ENCODE measurements at regions of chr6 and their contacts with region 1.

Region 1: DNA sequence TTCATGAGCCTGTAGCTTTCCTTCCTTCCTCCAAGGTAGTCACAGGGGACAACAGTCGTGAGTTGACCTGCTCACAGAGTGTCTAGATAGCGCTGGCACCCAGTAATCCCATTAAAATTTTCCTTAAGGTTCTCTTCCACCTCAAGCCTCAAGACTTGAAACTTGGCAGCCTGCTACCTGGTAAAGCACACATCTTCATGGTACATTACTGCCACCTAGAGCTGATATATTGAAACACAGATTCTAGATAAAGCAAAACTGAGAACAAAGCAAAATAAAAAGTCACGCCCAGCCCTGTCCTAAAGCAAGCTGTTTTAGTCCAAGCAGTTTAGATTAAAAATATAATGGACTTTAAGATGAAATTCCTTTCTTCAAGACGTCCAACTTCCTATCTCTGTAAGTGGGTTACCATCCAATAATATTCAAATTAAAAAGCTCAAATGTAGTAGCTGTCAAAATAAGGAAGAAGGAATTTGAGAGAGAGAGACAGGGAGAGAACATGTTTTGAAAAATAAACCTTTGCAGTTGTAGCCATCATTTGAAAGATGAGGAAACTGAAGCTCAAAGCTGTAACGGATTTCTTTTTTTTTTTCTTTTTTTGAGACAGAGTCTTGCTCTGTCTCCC is 50.7 kb upstream of the CD83 start:
- DNase-seq: peak; percentile 72
- H3K4me3 Mint-ChIP-seq: peak overlapping the region; percentile 58
- H3K27ac Mint-ChIP-seq: peak overlapping the region; percentile 81
- H3K4me1 Mint-ChIP-seq: peaks cover 19% of the 10 kb centered on the region
- H3K27me3 Mint-ChIP-seq: peaks cover 25% of the 10 kb centered on the region

Region 2: DNA sequence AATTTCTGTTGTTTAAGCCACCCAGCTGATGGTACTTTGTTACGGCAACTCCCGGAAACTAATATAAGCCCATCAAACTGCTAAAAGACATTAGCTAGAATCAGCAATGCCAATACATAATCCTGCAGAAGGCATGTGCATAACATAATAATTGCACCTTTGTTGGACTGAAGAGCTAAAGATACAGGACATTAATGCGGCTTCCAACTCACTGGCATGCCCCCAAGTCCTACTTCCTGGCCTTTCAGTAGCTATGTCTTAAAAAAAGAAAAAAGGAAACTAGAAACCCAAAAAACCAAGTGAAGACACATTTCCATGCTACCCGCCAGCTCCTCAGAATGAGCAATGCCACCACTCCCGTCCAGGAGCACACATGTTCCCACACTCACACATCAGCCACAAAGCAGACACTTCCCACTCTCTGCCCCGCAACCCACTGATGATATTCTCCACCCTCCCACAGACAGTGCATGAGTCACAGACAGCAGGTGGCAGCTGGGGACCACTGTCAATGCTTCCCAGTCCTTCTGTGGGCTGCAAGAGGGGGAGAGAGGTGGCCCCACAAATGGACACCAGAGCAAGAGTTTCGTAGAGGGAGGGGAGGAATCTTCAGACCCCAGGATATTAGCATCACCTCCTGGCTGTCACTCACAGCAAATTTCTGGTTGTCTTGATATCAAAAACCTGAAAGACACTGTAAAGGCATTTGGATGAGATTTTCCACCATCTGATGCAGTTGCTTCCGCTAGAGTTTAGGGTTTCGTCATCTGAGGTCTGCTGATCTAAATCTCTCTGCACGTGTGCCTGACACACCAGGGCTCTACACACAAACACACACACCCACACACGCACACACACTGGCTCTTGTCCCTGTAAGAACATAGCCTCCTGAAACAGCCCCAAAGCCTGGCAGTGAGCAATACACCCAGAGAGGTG is 612.3 kb before region 1 on chr6:
- intact Hi-C with region 1: loop called (anchors 10 kb)
- DNase-seq: peak; percentile 85
- H3K4me3 Mint-ChIP-seq: peak overlapping the region; percentile 42
- H3K27ac Mint-ChIP-seq: peak overlapping the region; percentile 93
- H3K4me1 Mint-ChIP-seq: peaks cover 43% of the 10 kb centered on the region
- H3K27me3 Mint-ChIP-seq: no peaks in the 10 kb centered on the region

Region 3: GRCh38 chr6:13814176-13814937 is 252.5 kb before region 1 on chr6 and contains the start of gene MCUR1:
- intact Hi-C with region 1: loop called (anchors 5 kb)
- DNase-seq: peak; percentile 95
- H3K4me3 Mint-ChIP-seq: peak within 1 kb of the TSS; percentile 88
- H3K27ac Mint-ChIP-seq: peak within 1 kb of the TSS; percentile 84
- H3K4me1 Mint-ChIP-seq: peaks cover 28% of the 10 kb centered on the region
- H3K27me3 Mint-ChIP-seq: peaks cover 16% of the 10 kb centered on the region
- total RNA-seq, gene MCUR1: 39.0 and 43.7 TPM in 2 replicates

Region 4: GRCh38 chr6:14046476-14047068 is 20.3 kb before region 1 on chr6:
- intact Hi-C with region 1: loop called (anchors 2 kb)
- DNase-seq: peak; percentile 82
- H3K4me3 Mint-ChIP-seq: no peak overlapping the region
- H3K27ac Mint-ChIP-seq: no peak overlapping the region
- H3K4me1 Mint-ChIP-seq: peaks cover 3% of the 10 kb centered on the region
- H3K27me3 Mint-ChIP-seq: peaks cover 35% of the 10 kb centered on the region

Region 5: GRCh38 chr6:14144678-14145113 is 77.8 kb after region 1 on chr6:
- intact Hi-C with region 1: loop called (anchors 2 kb)
- DNase-seq: peak; percentile 91
- H3K4me3 Mint-ChIP-seq: no peak overlapping the region
- H3K27ac Mint-ChIP-seq: no peak overlapping the region
- H3K4me1 Mint-ChIP-seq: peaks cover 6% of the 10 kb centered on the region
- H3K27me3 Mint-ChIP-seq: no peaks in the 10 kb centered on the region